Right ventricle myocardium superior (tissue), 1 donor: ENCODE measurements at regions of chr1 and their contacts with region 1.

Region 1: GRCh38 chr1:221435504-221435904 is 306.4 kb downstream of the DUSP10 start:
- DNase-seq: no peak
- ATAC-seq: peak; percentile 76

Region 2: GRCh38 chr1:220873868-220874655 is 561.4 kb before region 1 on chr1:
- intact Hi-C with region 1: loop called (anchors 5 kb)
- DNase-seq: no peak
- ATAC-seq: peak; percentile 37

Region 3: DNA sequence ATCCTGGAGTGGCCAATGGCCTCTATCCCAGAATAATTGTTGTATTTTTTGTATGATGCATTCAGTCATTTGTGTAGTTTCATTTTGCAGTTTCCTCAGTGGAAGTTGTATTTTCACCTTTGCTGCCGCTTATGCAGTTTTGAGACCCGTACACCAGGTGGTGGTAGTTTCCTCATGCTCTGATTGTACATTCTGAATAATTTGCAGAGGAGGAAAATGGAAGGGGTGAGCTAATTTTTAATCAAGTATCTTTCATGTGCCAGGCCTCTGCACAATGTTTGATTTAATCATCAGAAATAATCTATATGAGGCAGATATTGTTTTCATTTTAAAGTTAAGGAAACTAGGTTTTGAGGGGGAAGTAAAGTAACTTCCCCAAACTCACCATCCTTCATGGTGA is 526.7 kb before region 1 on chr1:
- intact Hi-C with region 1: loop called (anchors 10 kb)
- DNase-seq: no peak
- ATAC-seq: peak; percentile 58

Region 4: GRCh38 chr1:221263831-221264767 is 171.4 kb before region 1 on chr1:
- intact Hi-C with region 1: loop called (anchors 10 kb)
- DNase-seq: peak; percentile 38
- ATAC-seq: peak; percentile 67

Region 5: GRCh38 chr1:221405146-221405545 is 30.4 kb before region 1 on chr1:
- intact Hi-C with region 1: no loop called
- DNase-seq: no peak
- ATAC-seq: no peak

Region 6: GRCh38 chr1:221527886-221528624 is 92.6 kb after region 1 on chr1:
- intact Hi-C with region 1: no loop called
- DNase-seq: no peak
- ATAC-seq: peak; percentile 29